Astrocyte of the cerebellum (primary cell): ENCODE measurements at regions of chr18 and their contacts with region 1.

Region 1: DNA sequence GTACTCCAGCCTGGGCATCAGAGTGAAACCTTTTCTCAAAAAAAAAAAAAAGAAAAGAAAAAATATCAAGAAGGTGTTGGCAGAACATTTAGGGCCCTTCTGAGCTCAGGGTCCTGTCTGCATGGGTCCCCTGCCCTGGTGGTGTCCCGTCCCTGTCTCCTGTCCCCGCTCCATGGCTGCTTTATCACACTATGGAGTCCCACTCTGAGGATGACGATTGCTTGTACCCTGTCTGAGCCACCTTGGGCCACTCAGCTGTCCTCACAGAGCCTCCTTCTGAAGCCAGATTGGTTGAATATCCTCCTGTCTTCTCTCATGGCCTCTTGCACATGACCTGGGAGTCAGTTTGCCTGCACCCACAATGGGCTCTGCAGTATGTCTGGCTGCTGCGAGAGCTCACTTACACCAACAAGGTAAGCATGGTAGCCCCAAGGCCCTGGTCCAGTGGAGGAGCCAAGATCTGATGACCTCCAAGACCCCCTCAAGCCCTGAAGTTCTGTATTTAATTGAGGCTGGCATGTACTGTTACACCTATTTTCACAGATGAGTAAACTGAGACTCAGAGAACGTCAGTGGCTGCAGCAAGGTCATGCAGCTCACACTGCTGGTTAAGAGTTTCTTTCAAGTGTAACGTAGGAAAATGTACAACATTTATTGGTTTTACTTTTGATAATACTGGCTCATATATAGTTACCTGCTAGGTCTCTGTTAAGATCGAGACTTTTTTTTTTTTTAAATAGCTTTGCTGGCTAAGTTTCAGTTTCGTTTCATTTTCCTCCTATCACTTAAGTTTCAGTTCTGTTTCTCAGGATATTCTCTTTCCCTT is 16.9 kb upstream of the ZCCHC2 start:
- DNase-seq: no peak
- H3K4me3 ChIP-seq: no peak overlapping the region
- CTCF ChIP-seq: no peak

Region 2: DNA sequence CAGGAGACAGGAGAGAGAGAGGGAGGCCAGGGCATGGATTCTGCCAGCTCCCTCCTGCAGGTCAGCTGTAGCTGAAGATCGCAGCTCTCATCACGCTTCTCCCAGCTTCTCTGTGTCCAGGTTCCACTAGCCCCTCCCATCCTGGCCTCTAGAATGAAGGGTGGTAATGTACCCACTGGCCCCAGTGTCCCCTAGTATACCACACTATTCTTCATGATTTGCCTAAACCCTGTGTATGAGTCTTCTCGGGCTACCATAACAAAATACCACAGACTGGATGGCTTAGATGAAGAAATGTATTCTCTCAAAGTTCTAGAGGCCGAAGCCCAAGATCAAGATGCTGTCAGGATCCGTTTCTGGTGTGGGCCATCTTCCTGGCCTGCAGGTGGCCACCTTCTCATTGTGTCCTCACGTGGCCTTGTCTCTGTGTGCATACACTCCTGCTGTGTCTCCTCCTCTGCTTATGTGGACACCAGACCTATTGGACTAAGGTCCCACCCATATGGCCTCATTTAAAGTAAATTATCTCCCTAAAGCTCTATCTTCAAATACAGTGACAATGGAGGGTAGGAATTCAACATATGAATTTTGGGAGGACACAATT is 103.4 kb before region 1 on chr18:
- in situ Hi-C with region 1: no loop called
- DNase-seq: no peak
- H3K4me3 ChIP-seq: no peak overlapping the region
- CTCF ChIP-seq: no peak

Region 3: GRCh38 chr18:62445386-62445917 is 60.4 kb before region 1 on chr18:
- in situ Hi-C with region 1: loop called (anchors 5 kb)
- DNase-seq: no peak
- H3K4me3 ChIP-seq: no peak overlapping the region
- CTCF ChIP-seq: no peak

Region 4: DNA sequence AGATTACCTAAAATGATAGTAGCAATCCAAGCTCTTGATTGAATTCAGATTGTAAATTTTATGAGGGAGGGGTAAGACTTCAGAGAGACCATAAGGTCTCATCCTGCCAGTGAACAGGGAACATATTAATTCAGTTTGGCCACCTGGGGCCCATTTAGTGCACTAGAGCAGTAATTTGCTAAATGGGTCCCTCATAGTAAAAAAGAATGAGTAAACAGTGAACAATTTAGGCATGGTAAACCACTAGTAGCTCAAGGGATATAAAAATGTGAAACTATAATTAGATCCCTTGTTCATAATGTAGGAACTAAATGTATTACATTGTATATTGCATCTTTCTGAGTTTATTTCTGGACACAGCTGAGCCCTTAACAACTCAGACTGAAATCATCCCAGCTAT is 204.5 kb after region 1 on chr18:
- in situ Hi-C with region 1: no loop called
- DNase-seq: no peak
- H3K4me3 ChIP-seq: no peak overlapping the region
- CTCF ChIP-seq: no peak